ENCODE measurements at regions of chr12 and their contacts with region 1.

Region 1: DNA sequence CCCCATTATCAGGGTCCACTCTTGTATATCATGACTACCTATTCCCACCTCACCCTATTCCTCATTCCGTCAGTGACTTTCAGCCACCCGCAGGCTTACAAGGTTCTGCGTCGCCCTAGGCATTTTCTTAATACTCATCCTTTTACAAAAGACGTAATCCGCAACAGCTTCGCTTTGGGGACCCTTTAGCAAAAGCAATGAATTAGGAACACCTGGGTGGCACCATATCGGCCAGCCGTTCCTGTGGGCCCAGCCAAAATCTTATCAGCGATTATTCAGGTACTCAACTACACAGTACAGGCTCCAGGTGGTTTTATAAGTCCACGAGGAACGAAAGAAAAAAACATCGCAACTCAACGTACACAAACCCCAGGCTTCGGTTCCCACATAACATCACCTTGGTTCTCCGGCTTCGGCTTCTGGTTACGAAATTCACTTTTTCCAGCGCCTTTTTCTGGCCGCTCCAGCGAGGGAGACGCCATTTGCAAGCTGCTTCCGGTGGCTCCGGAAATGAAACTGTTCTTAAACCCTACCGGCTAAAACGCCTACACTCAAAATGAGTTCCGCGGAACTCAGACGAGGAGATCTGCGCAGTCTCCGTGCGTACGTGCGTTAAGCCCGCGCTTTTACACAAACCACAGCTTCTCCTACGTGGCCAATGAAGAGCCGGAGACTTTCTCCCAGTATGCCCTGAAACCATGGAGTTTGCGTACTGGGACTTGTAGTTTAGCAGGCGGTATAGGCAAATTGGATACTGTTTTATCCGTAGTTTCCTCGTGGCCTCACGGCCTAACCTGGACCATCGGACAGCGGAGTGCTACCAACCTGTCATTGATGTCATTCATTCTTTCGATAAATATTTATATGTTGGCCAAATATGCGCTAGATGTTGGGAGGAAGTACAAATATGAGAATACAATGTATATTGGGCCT is at the start of gene KRR1:
- DNase-seq: peak; percentile 88 to 94 (median 92)
- H3K4me3 ChIP-seq: peak within 1 kb of the TSS; percentile 85 to 99
- H3K4me3 Mint-ChIP-seq: peak within 1 kb of the TSS; percentile 99 to 100 (median 100)
- H3K27ac ChIP-seq: peak within 1 kb of the TSS; percentile 94
- H3K27ac Mint-ChIP-seq: peak within 1 kb of the TSS; percentile 98 to 100 (median 100)
- H3K4me1 ChIP-seq: peaks cover 27% of the 10 kb centered on the region
- H3K4me1 Mint-ChIP-seq: peaks cover 25 to 42% (median 31%) of the 10 kb centered on the region in 4 donors
- H3K27me3 ChIP-seq: no peaks in the 10 kb centered on the region
- H3K27me3 Mint-ChIP-seq: no peaks in the 10 kb centered on the region
- total RNA-seq, gene KRR1: 60.7 to 65.0 TPM

Region 2: DNA sequence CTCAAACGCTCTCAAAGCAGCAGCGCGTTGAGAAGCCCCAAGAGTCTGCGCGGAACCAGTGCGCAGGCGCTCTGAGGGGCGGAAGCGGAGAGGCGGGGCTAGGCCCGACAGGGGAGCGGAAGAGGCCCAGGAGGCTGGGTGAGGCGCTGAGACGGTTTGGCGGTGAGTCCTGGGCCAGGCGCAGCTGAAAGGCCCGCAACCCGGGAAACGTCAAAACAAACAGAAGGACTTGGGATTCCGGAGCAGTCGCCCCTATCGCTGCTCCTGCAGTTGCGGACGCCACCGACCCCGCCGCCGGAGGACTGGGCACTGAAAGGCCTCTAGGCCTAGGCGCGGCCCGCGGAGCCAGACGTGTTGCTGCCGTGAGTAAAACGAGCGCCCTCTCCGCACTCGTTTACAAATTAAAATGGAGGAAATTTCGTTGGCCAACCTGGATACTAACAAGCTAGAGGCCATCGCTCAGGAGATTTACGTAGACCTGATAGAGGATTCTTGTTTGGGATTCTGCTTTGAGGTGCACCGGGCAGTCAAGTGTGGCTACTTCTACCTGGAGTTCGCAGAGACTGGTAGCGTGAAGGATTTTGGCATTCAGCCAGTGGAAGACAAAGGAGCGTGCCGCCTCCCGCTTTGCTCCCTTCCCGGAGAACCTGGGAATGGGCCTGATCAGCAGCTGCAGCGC is 973.5 kb before region 1 on chr12 and contains the start of gene ATXN7L3B:
- CTCF ChIA-PET with region 1: no interaction called
- POLR2A ChIA-PET with region 1: no interaction called
- intact Hi-C with region 1: loop called (anchors 1 kb)
- DNase-seq: peak; percentile 95 to 97 (median 97)
- H3K4me3 ChIP-seq: peak within 1 kb of the TSS; percentile 92 to 99
- H3K4me3 Mint-ChIP-seq: peak within 1 kb of the TSS; percentile 81 to 99 (median 96)
- H3K27ac ChIP-seq: peak within 1 kb of the TSS; percentile 95
- H3K27ac Mint-ChIP-seq: peak within 1 kb of the TSS; percentile 97 to 100 (median 99)
- H3K4me1 ChIP-seq: peaks cover 48% of the 10 kb centered on the region
- H3K4me1 Mint-ChIP-seq: peaks cover 39 to 60% (median 49%) of the 10 kb centered on the region in 4 donors
- H3K27me3 ChIP-seq: no peaks in the 10 kb centered on the region
- H3K27me3 Mint-ChIP-seq: no peaks in the 10 kb centered on the region
- total RNA-seq, gene ATXN7L3B: 45.1 to 46.2 TPM

Region 3: DNA sequence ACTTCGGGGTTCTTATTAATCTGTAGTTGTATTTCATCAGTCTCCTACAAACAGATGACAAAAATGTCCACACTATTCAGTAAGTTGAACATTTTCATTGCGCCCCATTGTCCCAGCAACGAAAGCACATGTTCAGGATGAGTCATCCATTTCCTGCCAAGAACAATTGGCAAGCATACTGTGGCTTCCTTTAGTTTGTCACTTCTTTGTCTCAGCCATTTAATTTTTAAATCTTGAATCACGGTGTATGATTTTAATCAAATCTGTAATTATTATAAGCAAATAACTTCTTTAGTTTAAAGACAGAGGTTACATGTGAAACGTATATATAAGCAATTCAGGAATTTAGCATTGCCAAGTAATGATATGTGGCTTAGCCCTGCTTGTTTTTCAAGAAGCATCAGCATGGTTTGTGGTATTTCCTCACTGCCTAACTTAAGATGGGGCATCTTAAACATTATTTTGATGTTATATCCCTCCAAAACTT is 211.4 kb after region 1 on chr12:
- CTCF ChIA-PET with region 1: no interaction called
- POLR2A ChIA-PET with region 1: no interaction called
- intact Hi-C with region 1: loop called (anchors 5 kb)
- DNase-seq: peak; percentile 29 to 62 (median 36)
- H3K4me3 ChIP-seq: no peak overlapping the region
- H3K4me3 Mint-ChIP-seq: peak overlapping the region in 4 of 8 donors; percentile 1 to 75 (median 57)
- H3K27ac ChIP-seq: no peak overlapping the region
- H3K27ac Mint-ChIP-seq: peak overlapping the region; percentile 27 to 89 (median 76)
- H3K4me1 ChIP-seq: peaks cover 18% of the 10 kb centered on the region
- H3K4me1 Mint-ChIP-seq: peaks cover 14 to 32% (median 20%) of the 10 kb centered on the region in 4 donors
- H3K27me3 ChIP-seq: no peaks in the 10 kb centered on the region
- H3K27me3 Mint-ChIP-seq: no peaks in the 10 kb centered on the region

Region 4: DNA sequence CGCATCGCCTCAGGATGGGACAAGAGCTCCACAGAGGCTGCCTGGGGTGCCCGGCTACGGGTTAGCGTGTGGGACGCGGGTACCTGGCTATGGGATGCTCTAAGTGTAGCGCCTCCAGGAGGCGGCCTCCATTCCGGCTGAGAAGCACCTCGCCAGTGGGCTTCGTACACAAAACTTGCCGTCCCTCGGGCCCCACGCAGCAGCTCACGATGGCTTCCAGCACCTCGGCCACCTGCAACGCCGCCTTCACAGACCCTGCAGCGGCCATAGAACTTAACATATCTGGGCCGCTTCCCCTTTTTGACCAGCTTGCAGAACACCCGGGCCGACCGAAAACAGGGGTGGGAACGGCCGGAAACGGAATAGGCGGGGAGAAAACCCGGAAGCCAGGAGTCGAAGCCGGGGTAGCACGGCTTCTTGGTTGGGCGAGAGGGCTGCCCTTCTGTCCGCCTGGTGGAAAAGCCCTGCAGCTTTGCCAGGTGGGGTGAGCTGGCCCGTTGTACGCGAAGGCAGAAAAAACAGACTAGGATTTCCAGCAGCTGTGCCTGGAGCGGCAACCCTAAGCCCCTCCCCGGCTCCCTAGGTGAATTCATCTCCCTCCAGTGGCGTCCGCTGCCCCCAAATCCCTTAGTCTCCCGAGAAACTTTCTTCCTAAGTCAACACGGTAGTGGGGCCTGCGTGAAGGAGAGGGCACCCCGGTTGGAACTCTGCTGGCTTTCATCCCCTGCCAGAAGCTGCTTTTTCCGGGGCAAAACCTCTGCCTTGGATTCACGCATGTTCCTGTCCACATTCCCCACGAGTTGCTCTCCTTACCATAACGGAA is 836.9 kb after region 1 on chr12 and contains the start of gene BBS10:
- CTCF ChIA-PET with region 1: interaction called, 3 read pairs
- POLR2A ChIA-PET with region 1: interaction called, 5 read pairs
- intact Hi-C with region 1: loop called (anchors 1 kb)
- DNase-seq: peak; percentile 83 to 89 (median 85)
- H3K4me3 ChIP-seq: peak within 1 kb of the TSS; percentile 64 to 82
- H3K4me3 Mint-ChIP-seq: peak within 1 kb of the TSS; percentile 95 to 99 (median 96)
- H3K27ac ChIP-seq: peak within 1 kb of the TSS; percentile 63
- H3K27ac Mint-ChIP-seq: peak within 1 kb of the TSS; percentile 90 to 97 (median 94)
- H3K4me1 ChIP-seq: peaks cover 23% of the 10 kb centered on the region
- H3K4me1 Mint-ChIP-seq: peaks cover 13 to 43% (median 23%) of the 10 kb centered on the region in 4 donors
- H3K27me3 ChIP-seq: no peaks in the 10 kb centered on the region
- H3K27me3 Mint-ChIP-seq: no peaks in the 10 kb centered on the region
- total RNA-seq, gene BBS10: 11.5 to 12.6 TPM

Region 5: DNA sequence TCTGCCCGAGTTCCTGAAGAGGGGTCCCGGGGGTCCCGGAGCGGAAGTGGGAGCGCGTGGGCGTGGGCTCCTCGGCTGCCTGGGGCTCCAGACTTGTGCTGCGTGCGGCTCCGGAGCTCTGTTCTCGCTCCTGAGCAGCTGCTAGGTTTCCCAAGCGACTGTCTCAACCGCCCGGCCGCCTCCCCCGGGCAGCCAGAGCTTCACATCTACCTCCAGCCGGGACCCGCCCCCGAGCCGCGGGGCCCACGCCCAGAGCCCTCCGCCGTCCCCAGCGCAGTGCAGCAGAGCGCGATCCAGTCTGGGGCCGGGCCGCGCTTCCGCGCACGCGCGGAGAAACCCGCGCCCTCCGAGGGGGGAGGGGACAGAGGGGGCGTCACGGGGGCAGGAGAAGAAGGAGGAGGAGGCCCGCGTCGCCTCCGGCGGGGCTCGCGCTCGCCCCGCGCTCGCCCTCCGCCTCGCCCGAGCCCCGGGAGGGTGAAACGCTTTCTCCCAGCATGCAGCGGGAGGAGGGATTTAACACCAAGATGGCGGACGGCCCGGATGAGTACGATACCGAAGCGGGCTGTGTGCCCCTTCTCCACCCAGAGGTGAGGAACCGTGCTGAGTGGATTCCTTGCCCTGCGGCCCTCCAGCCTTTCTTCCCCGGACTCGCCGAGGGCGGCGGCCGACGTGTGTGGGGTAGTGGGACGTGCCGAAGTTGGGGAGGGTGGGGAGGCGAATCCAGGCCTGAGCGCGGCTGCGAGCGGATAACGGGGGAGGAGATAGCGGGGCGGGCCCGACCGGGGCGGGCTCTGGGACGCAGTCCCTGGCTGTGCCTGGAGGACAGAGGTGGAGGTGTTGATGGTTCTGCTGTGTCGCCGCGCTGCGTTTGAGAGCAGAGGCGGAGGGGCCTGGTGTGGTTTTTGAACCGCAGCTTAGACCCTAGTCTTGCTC is 1252.6 kb after region 1 on chr12 and contains the start of gene ZDHHC17:
- CTCF ChIA-PET with region 1: no interaction called
- POLR2A ChIA-PET with region 1: interaction called, 3 read pairs
- intact Hi-C with region 1: loop called (anchors 1 kb)
- DNase-seq: peak; percentile 92 to 94 (median 93)
- H3K4me3 ChIP-seq: peak within 1 kb of the TSS; percentile 54 to 78
- H3K4me3 Mint-ChIP-seq: peak within 1 kb of the TSS; percentile 97 to 98 (median 98)
- H3K27ac ChIP-seq: peak within 1 kb of the TSS; percentile 90
- H3K27ac Mint-ChIP-seq: peak within 1 kb of the TSS; percentile 95 to 99 (median 98)
- H3K4me1 ChIP-seq: peaks cover 36% of the 10 kb centered on the region
- H3K4me1 Mint-ChIP-seq: peaks cover 21 to 53% (median 35%) of the 10 kb centered on the region in 4 donors
- H3K27me3 ChIP-seq: no peaks in the 10 kb centered on the region
- H3K27me3 Mint-ChIP-seq: no peaks in the 10 kb centered on the region
- total RNA-seq, gene ZDHHC17: 51.5 to 52.9 TPM